Endothelial cell of umbilical vein (primary cell): ENCODE measurements at regions of chr6 and their contacts with region 1.

Region 1: DNA sequence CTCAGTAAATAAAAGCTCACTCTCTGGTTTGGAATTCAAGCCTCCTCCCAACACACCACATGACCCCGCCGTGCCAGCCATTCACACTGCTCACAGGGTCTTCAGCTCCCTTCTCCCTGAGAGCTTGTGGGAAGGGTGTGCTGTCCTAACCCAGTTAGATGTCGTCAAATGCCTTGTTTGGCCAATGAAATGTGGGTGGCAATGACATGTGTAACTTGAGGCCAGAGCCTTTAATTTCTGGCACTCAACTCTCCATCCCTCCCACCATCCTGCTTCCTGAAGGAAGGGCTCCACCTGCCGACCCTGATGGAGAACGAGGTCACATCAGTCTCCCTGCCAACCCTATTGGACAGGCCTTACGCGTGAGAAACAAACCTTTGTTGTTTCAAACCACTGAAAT is 224.5 kb upstream of the AGPAT4 start:
- DNase-seq: no peak
- H3K4me3 ChIP-seq: no peak overlapping the region
- H3K27ac ChIP-seq: no peak overlapping the region
- H3K4me1 ChIP-seq: no peaks in the 10 kb centered on the region
- H3K27me3 ChIP-seq: no peaks in the 10 kb centered on the region
- CTCF ChIP-seq: no peak
- POLR2A ChIP-seq: no peak

Region 2: DNA sequence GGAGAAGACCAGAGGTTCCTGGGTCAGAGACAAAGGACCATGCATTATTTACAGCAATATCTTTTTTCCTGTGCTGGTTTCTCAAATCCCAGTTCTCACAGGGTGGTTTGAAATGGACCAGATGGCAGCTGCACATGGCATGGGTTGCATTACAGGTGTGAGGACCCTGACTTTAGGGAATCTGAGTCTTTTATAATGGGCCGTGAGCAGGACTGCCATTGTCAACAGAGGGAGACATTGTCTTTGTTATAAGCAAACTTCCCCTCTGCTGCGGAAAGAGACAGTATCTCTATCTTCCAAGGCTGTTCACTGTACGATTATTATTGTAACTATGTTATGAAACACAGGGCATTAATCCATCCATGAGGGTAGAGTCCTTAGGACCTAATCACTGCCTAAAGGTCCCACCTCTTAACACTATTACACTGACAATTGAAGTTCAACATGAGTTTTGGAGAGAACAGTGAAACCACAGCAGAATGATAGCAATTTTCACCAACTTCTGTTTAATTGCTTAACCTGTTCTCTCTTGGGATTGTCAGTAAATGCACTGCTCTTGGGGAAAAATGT is 68.4 kb before region 1 on chr6:
- CTCF ChIA-PET with region 1: no interaction called
- POLR2A ChIA-PET with region 1: no interaction called
- dilution Hi-C with region 1: no loop called
- intact Hi-C with region 1: loop called (anchors 1 kb)
- DNase-seq: peak; percentile 14
- H3K4me3 ChIP-seq: no peak overlapping the region
- H3K27ac ChIP-seq: no peak overlapping the region
- H3K4me1 ChIP-seq: no peaks in the 10 kb centered on the region
- H3K27me3 ChIP-seq: no peaks in the 10 kb centered on the region
- CTCF ChIP-seq: peak in 1 of 2 donors; percentile 14
- POLR2A ChIP-seq: no peak

Region 3: DNA sequence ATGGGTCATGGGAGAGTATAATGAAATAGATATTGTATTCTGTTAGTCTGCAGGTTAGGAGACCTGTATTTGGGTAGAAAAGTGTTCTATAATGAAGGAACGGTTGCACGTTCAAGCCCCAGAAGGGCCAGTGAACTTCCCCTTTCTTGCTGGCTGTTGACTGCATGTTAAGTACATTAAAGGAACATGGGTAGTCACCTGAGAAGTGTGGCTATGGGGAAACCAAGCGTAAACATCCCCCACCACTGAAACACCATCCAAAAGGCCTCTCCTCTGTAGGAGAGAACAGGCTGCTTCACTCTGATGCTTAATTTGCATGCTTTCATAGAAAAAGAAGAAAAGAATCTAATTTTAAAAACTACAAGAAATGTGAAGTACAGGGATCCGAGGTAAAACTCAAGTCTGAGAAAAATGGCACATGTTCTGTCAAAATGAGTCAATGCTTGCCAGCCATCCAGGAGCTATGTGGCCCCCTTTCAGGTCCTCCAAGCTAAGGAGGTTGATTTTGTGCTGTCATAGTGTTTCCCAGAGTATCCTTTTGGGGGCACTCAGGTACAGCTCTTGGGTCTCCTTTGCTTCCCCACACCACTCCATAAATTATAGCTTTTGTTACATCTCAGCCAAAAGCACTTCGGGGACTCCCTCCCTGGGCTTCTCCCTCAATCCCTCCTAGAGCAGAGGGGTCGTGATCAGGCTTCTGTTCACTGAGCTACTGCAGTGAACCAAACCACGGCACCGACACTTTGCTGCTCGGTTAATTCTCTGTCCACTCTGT is 59.2 kb after region 1 on chr6:
- CTCF ChIA-PET with region 1: no interaction called
- POLR2A ChIA-PET with region 1: no interaction called
- dilution Hi-C with region 1: no loop called
- intact Hi-C with region 1: no loop called
- DNase-seq: no peak
- H3K4me3 ChIP-seq: no peak overlapping the region
- H3K27ac ChIP-seq: no peak overlapping the region
- H3K4me1 ChIP-seq: no peaks in the 10 kb centered on the region
- H3K27me3 ChIP-seq: no peaks in the 10 kb centered on the region
- CTCF ChIP-seq: no peak
- POLR2A ChIP-seq: no peak

Region 4: DNA sequence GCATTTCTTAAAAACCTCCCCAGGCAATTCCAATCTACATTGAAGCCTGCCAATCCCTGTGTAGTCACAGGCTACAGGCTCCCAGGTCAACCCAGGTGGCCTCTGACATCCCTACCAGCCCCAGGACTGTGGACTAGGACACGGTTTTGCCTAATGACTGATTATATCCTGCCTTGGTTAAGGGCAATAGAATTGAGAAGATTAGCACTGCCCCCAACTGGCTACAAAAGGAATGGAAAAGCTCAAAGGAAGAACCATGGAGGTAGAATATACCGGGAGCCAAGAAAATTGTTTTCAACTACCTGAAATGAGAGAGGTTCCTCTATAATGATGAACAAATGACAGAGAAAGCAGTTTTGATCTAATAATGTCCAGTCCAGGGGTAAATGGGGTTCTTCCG is 196.6 kb after region 1 on chr6:
- CTCF ChIA-PET with region 1: no interaction called
- POLR2A ChIA-PET with region 1: no interaction called
- dilution Hi-C with region 1: no loop called
- intact Hi-C with region 1: loop called (anchors 10 kb)
- DNase-seq: peak; percentile 4
- H3K4me3 ChIP-seq: no peak overlapping the region
- H3K27ac ChIP-seq: no peak overlapping the region
- H3K4me1 ChIP-seq: no peaks in the 10 kb centered on the region
- H3K27me3 ChIP-seq: no peaks in the 10 kb centered on the region
- CTCF ChIP-seq: peak in 1 of 2 donors; percentile 9
- POLR2A ChIP-seq: no peak